CD4-positive, alpha-beta T cell (primary cell): ENCODE measurements at regions of chr13 and their contacts with region 1.

Region 1: GRCh38 chr13:48155848-48156247 is 60.9 kb upstream of the MED4 start:
- DNase-seq: peak in 9 of 14 experiments; percentile 7 to 92 (median 39)
- ATAC-seq: peak; percentile 88
- H3K4me3 ChIP-seq: peak overlapping the region; percentile 36
- H3K4me3 Mint-ChIP-seq: peak overlapping the region; percentile 62
- H3K27ac ChIP-seq: peak overlapping the region; percentile 76 to 88
- H3K27ac Mint-ChIP-seq: peak overlapping the region; percentile 93
- H3K4me1 ChIP-seq: peaks cover 72% of the 10 kb centered on the region
- H3K4me1 Mint-ChIP-seq: peaks cover 86% of the 10 kb centered on the region
- H3K27me3 ChIP-seq: no peaks in the 10 kb centered on the region
- H3K27me3 Mint-ChIP-seq: no peaks in the 10 kb centered on the region
- CTCF ChIP-seq: no peak

Region 2: DNA sequence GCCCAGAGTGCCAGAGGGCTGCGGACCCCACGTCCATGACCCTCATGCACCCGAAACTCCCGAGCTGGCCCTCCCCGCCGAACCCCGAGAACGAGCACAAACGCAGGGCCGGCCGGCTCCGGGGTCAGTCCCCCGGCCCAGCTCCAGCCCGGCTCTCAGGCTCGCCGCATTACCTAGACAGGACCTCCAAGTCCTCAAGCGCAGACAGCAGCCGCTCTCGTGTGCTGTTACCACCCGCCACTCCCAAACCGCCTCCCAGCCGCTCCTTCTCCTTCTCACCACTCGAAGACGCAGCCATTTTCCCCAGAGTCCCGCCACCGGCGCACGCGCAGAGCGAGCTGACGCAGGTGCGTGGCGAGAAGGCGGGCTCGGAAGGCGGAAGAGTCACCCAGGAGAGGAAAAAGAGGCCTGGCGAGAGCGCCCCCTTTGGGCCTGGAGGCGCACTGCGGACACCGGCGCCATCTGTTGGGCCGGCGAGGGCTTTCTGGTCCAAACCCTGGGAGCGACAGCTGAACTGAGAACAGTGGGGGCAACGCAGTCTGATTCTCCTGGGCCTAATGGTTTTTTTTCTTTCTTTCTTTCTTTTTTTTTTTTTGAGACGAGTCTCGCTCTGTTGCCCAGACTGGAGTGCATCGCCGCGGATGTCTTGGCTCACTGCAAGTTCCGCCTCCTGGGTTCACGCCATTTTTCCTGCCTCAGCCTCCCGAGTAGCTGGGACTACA is 60.9 kb before region 1 on chr13 and contains the start of gene MED4:
- CTCF ChIA-PET with region 1: interaction called, 19 read pairs
- POLR2A ChIA-PET with region 1: interaction called, 8 read pairs
- intact Hi-C with region 1: no loop called
- DNase-seq: peak; percentile 95 to 99 (median 97)
- ATAC-seq: peak; percentile 98
- H3K4me3 ChIP-seq: peak within 1 kb of the TSS; percentile 85
- H3K4me3 Mint-ChIP-seq: peak within 1 kb of the TSS; percentile 100
- H3K27ac ChIP-seq: peak within 1 kb of the TSS; percentile 84 to 89
- H3K27ac Mint-ChIP-seq: peak within 1 kb of the TSS; percentile 95
- H3K4me1 ChIP-seq: peaks cover 23% of the 10 kb centered on the region
- H3K4me1 Mint-ChIP-seq: peaks cover 53% of the 10 kb centered on the region
- H3K27me3 ChIP-seq: no peaks in the 10 kb centered on the region
- H3K27me3 Mint-ChIP-seq: no peaks in the 10 kb centered on the region
- CTCF ChIP-seq: peak; percentile 99
- total RNA-seq, gene MED4: 48.9 to 56.1 TPM

Region 3: DNA sequence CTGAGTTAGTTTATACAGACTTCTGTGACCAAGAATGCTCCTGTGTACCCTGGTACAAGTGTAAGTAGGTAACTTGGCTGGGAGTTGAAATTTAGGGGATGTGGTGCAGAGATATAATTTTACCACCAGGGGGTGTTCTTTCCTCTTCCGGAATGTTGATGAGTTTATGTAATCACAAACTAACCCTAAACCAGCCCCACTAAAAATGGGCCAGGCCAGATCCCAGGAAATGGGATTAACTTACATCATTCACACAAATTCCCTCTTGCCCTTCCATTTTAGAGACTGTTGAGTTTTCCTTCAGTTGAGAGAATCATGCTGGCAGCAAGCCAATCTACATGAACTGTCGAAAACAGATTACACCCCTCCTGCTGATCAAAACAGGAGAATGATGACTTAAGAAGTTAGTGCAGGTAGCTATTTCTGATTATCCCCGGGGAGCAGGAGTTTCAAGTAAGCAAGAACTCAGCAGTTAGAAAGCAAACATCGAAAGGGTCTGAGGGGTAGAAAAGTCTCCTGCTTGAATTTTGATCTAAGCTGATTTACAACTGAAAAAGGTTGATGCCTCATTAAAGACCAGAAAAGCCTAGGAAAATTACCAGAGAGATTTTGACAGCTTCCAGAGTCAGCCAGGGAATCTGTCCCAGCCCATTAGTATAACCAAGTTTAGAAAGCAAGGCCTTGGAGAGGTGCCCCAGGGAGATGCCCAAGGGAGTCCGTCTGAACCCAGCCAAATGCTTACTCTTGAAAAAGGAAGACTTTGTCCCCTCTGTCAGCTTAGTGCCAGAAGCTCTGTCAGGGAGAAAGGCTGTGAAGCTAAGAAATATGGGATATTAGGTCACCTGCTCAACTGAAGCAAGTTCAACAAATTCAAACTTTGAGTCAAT is 28.7 kb before region 1 on chr13:
- CTCF ChIA-PET with region 1: interaction called, 6 read pairs
- POLR2A ChIA-PET with region 1: interaction called, 16 read pairs
- intact Hi-C with region 1: loop called in 1 of 2 experiments (anchors 2 kb)
- DNase-seq: peak; percentile 6 to 84 (median 32)
- ATAC-seq: peak; percentile 93
- H3K4me3 ChIP-seq: no peak overlapping the region
- H3K4me3 Mint-ChIP-seq: peak overlapping the region; percentile 23
- H3K27ac ChIP-seq: peak overlapping the region; percentile 61 to 73
- H3K27ac Mint-ChIP-seq: peak overlapping the region; percentile 91
- H3K4me1 ChIP-seq: peaks cover 11% of the 10 kb centered on the region
- H3K4me1 Mint-ChIP-seq: peaks cover 33% of the 10 kb centered on the region
- H3K27me3 ChIP-seq: no peaks in the 10 kb centered on the region
- H3K27me3 Mint-ChIP-seq: no peaks in the 10 kb centered on the region
- CTCF ChIP-seq: peak; percentile 81

Region 4: DNA sequence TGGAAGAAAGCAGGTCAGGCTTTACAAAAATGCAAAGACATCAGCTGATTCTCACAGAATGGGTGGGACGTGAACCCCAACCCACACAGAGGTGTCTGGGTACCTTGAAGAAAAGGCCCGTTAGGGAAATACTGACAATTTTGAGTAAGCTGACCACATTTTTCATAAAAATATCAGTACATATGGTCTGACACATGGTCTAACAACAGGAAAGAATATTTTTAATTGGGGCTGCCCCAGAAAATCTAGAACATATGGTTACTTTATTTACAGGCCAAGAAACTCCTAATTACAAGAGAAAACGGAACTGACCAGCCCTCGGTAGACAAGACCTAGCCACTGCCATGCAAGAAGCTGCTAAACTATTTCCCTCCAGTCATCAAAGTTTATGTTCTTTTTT is 28.4 kb after region 1 on chr13:
- CTCF ChIA-PET with region 1: no interaction called
- POLR2A ChIA-PET with region 1: interaction called, 92 read pairs
- intact Hi-C with region 1: loop called in 1 of 2 experiments (anchors 1 kb)
- DNase-seq: no peak
- ATAC-seq: no peak
- H3K4me3 ChIP-seq: no peak overlapping the region
- H3K4me3 Mint-ChIP-seq: peak overlapping the region; percentile 43
- H3K27ac ChIP-seq: peak overlapping the region in 1 of 2 donors; percentile 19
- H3K27ac Mint-ChIP-seq: peak overlapping the region; percentile 89
- H3K4me1 ChIP-seq: peaks cover 45% of the 10 kb centered on the region
- H3K4me1 Mint-ChIP-seq: peaks cover 68% of the 10 kb centered on the region
- H3K27me3 ChIP-seq: no peaks in the 10 kb centered on the region
- H3K27me3 Mint-ChIP-seq: no peaks in the 10 kb centered on the region
- CTCF ChIP-seq: no peak

Region 5: DNA sequence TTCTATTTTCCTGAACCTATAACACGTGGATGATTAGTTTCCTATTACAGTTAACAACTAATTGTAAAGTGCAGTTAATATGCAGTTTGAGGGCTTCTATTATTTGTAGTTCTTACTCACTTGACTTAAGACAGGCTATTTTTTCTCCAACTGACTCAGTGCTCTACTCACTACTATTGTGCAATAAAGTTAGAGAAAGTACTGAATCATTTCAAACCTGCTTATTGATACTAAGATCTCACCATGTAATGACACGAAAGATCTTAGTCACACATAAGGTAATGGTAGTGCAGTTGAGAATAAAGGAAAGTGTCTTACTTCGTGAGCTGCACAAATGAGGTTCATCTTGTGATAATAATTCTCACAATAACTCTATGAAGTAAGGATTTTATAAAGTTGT is 54.3 kb after region 1 on chr13:
- CTCF ChIA-PET with region 1: no interaction called
- POLR2A ChIA-PET with region 1: interaction called, 4 read pairs
- intact Hi-C with region 1: loop called in 1 of 2 experiments (anchors 5 kb)
- DNase-seq: peak in 2 of 14 experiments; percentile 21 to 49
- ATAC-seq: no peak
- H3K4me3 ChIP-seq: no peak overlapping the region
- H3K4me3 Mint-ChIP-seq: no peak overlapping the region
- H3K27ac ChIP-seq: no peak overlapping the region
- H3K27ac Mint-ChIP-seq: no peak overlapping the region
- H3K4me1 ChIP-seq: peaks cover 5% of the 10 kb centered on the region
- H3K4me1 Mint-ChIP-seq: peaks cover 12% of the 10 kb centered on the region
- H3K27me3 ChIP-seq: no peaks in the 10 kb centered on the region
- H3K27me3 Mint-ChIP-seq: no peaks in the 10 kb centered on the region
- CTCF ChIP-seq: no peak

Region 6: GRCh38 chr13:48222358-48223301 is 66.8 kb after region 1 on chr13:
- CTCF ChIA-PET with region 1: interaction called, 4 read pairs
- POLR2A ChIA-PET with region 1: interaction called, 55 read pairs
- intact Hi-C with region 1: loop called in 1 of 2 experiments (anchors 5 kb)
- DNase-seq: peak in 3 of 14 experiments; percentile 33 to 40 (median 37)
- ATAC-seq: peak; percentile 34
- H3K4me3 ChIP-seq: peak overlapping the region; percentile 23
- H3K4me3 Mint-ChIP-seq: peak overlapping the region; percentile 81
- H3K27ac ChIP-seq: peak overlapping the region; percentile 70 to 90
- H3K27ac Mint-ChIP-seq: peak overlapping the region; percentile 97
- H3K4me1 ChIP-seq: peaks cover 43% of the 10 kb centered on the region
- H3K4me1 Mint-ChIP-seq: peaks cover 67% of the 10 kb centered on the region
- H3K27me3 ChIP-seq: no peaks in the 10 kb centered on the region
- H3K27me3 Mint-ChIP-seq: no peaks in the 10 kb centered on the region
- CTCF ChIP-seq: no peak

Region 7: DNA sequence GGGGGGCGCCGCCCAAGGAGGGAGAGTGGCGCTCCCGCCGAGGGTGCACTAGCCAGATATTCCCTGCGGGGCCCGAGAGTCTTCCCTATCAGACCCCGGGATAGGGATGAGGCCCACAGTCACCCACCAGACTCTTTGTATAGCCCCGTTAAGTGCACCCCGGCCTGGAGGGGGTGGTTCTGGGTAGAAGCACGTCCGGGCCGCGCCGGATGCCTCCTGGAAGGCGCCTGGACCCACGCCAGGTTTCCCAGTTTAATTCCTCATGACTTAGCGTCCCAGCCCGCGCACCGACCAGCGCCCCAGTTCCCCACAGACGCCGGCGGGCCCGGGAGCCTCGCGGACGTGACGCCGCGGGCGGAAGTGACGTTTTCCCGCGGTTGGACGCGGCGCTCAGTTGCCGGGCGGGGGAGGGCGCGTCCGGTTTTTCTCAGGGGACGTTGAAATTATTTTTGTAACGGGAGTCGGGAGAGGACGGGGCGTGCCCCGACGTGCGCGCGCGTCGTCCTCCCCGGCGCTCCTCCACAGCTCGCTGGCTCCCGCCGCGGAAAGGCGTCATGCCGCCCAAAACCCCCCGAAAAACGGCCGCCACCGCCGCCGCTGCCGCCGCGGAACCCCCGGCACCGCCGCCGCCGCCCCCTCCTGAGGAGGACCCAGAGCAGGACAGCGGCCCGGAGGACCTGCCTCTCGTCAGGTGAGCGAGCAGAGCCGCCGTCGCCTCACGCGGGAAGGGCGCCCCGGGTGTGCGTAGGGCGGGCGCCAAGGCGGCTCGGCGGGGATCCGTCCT is 147.7 kb after region 1 on chr13 and contains the start of gene RB1:
- CTCF ChIA-PET with region 1: no interaction called
- POLR2A ChIA-PET with region 1: interaction called, 5 read pairs
- intact Hi-C with region 1: loop called in 1 of 2 experiments (anchors 2 kb)
- DNase-seq: peak; percentile 77 to 97 (median 85)
- ATAC-seq: peak; percentile 72
- H3K4me3 ChIP-seq: peak within 1 kb of the TSS; percentile 95
- H3K4me3 Mint-ChIP-seq: peak within 1 kb of the TSS; percentile 92
- H3K27ac ChIP-seq: peak within 1 kb of the TSS; percentile 97 to 98
- H3K27ac Mint-ChIP-seq: peak within 1 kb of the TSS; percentile 97
- H3K4me1 ChIP-seq: peaks cover 18% of the 10 kb centered on the region
- H3K4me1 Mint-ChIP-seq: peaks cover 45% of the 10 kb centered on the region
- H3K27me3 ChIP-seq: no peaks in the 10 kb centered on the region
- H3K27me3 Mint-ChIP-seq: no peaks in the 10 kb centered on the region
- CTCF ChIP-seq: no peak
- total RNA-seq, gene RB1: 14.9 to 18.4 TPM

Region 8: DNA sequence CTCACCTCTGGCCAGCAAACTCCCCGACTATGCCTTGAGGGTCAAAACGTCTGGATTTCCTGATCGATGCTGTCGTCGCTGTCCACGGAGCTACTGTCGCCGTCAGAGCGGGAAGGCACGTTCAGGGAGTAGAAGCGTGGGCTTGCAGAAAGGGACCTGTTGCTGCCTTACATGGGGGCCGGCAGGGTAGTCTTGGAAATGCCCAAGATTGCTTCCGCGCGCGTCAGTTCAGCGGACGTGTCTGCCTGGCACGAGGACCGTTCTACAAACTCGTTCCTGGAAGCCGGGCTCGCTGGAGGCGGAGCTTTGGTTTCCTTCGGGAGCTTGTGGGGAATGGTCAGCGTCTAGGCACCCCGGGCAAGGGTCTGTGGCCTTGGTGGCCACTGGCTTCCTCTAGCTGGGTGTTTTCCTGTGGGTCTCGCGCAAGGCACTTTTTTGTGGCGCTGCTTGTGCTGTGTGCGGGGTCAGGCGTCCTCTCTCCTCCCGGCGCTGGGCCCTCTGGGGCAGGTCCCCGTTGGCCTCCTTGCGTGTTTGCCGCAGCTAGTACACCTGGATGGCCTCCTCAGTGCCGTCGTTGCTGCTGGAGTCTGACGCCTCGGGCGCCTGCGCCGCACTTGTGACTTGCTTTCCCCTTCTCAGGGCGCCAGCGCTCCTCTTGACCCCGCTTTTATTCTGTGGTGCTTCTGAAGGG is 163.1 kb after region 1 on chr13:
- CTCF ChIA-PET with region 1: no interaction called
- POLR2A ChIA-PET with region 1: no interaction called
- intact Hi-C with region 1: no loop called
- DNase-seq: peak in 7 of 14 experiments; percentile 3 to 60 (median 31)
- ATAC-seq: peak; percentile 55
- H3K4me3 ChIP-seq: peak overlapping the region; percentile 55
- H3K4me3 Mint-ChIP-seq: peak overlapping the region; percentile 88
- H3K27ac ChIP-seq: peak overlapping the region in 1 of 2 donors; percentile 21
- H3K27ac Mint-ChIP-seq: peak overlapping the region; percentile 74
- H3K4me1 ChIP-seq: peaks cover 28% of the 10 kb centered on the region
- H3K4me1 Mint-ChIP-seq: peaks cover 37% of the 10 kb centered on the region
- H3K27me3 ChIP-seq: no peaks in the 10 kb centered on the region
- H3K27me3 Mint-ChIP-seq: peaks cover 4% of the 10 kb centered on the region
- CTCF ChIP-seq: no peak